ENCODE measurements at regions of chr3 and their contacts with region 1.

Region 1: GRCh38 chr3:114152519-114153151 is 26.2 kb downstream of the DRD3 start:
- DNase-seq: peak; percentile 78
- ATAC-seq: peak; percentile 98
- H3K4me3 Mint-ChIP-seq: peak overlapping the region; percentile 68
- H3K27ac Mint-ChIP-seq: peak overlapping the region; percentile 47
- H3K4me1 Mint-ChIP-seq: peaks cover 11% of the 10 kb centered on the region
- H3K27me3 Mint-ChIP-seq: no peaks in the 10 kb centered on the region
- CTCF ChIP-seq: peak; percentile 18

Region 2: DNA sequence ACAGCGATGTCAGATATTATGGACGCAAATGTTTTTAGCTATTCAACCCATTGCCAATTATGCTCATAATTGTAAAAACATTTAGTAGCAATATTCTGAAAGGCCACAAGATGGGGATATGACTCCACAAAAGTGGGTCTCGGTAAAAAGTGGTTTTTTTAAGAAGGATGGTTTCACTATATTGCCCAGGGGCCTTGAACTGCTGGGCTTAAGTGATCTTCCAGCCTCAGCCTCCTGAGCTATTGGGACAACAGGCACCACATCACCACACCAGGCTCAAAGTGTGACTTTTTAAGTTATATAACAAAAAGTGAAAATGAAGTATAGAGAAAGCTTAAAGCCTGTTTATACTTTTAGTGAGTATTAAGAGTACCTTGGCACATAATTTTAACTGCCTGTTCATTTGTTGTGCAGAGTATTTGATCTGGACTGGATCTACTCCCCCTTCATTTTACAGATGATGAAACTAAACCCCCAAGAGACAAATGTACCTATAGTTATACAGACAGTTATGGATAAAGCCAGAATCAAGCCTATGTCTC is 416.0 kb before region 1 on chr3:
- CTCF ChIA-PET with region 1: interaction called, 7 read pairs
- POLR2A ChIA-PET with region 1: no interaction called
- intact Hi-C with region 1: loop called (anchors 1 kb)
- DNase-seq: no peak
- ATAC-seq: peak; percentile 86
- H3K4me3 Mint-ChIP-seq: no peak overlapping the region
- H3K27ac Mint-ChIP-seq: peak overlapping the region; percentile 76
- H3K4me1 Mint-ChIP-seq: peaks cover 40% of the 10 kb centered on the region
- H3K27me3 Mint-ChIP-seq: no peaks in the 10 kb centered on the region
- CTCF ChIP-seq: no peak

Region 3: DNA sequence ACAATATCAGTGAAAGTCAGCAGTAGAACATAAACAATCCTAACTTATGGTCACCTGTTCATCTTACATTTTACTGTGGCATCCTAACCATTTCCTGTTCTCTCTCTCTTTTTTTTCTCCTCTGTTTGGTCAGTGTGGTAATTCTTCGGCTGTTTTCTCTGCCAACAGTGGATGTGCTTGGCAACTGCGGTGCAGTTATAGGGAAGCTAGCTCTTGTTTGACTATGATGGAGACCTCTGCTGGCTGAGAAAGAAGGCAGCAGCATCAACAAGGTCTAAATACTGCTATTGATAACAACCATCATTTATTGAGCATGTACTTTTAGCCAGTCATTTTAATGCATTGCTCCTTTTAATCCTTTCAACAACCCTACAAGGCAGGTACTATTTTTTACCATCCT is 26.9 kb after region 1 on chr3:
- CTCF ChIA-PET with region 1: interaction called, 8 read pairs
- POLR2A ChIA-PET with region 1: no interaction called
- intact Hi-C with region 1: loop called (anchors 2 kb)
- DNase-seq: no peak
- ATAC-seq: peak; percentile 50
- H3K4me3 Mint-ChIP-seq: no peak overlapping the region
- H3K27ac Mint-ChIP-seq: no peak overlapping the region
- H3K4me1 Mint-ChIP-seq: peaks cover 3% of the 10 kb centered on the region
- H3K27me3 Mint-ChIP-seq: peaks cover 9% of the 10 kb centered on the region
- CTCF ChIP-seq: no peak

Region 4: GRCh38 chr3:114362815-114363214 is 210.2 kb after region 1 on chr3:
- CTCF ChIA-PET with region 1: interaction called, 3 read pairs
- POLR2A ChIA-PET with region 1: no interaction called
- intact Hi-C with region 1: loop called (anchors 1 kb)
- DNase-seq: no peak
- ATAC-seq: peak; percentile 34
- H3K4me3 Mint-ChIP-seq: no peak overlapping the region
- H3K27ac Mint-ChIP-seq: no peak overlapping the region
- H3K4me1 Mint-ChIP-seq: peaks cover 4% of the 10 kb centered on the region
- H3K27me3 Mint-ChIP-seq: no peaks in the 10 kb centered on the region
- CTCF ChIP-seq: no peak

Region 5: DNA sequence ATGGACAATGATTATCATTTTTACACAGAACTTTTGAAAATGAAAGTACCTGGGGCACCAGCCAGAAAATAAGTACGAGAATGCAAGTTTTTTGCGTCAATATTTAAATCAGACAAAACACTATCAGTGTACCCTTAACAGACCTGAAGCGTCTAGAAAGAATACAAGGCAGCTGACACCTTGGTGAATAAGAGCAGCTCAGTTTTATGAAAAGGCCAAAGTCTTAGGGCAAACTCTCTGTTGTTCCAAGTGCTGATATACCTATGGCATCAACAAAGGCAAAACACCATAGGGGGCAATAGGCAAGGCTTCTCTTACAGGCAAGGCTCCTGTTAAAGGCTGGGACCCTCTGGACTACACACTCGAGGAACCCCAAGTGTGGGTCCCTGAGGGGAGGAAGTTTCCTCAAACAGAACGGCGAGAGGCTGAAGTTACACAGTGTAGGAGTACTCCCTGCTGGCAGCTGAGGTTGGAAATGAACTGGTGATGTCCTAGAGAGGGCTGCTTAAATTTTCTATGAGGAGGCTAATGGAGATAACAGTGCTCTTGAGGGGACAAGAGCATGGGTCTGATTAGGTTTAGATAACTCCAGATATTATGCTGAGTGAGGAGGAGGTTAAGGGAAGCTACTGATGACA is 432.2 kb after region 1 on chr3:
- CTCF ChIA-PET with region 1: no interaction called
- POLR2A ChIA-PET with region 1: no interaction called
- intact Hi-C with region 1: loop called (anchors 1 kb)
- DNase-seq: no peak
- ATAC-seq: peak; percentile 73
- H3K4me3 Mint-ChIP-seq: peak overlapping the region; percentile 63
- H3K27ac Mint-ChIP-seq: peak overlapping the region; percentile 76
- H3K4me1 Mint-ChIP-seq: peaks cover 23% of the 10 kb centered on the region
- H3K27me3 Mint-ChIP-seq: no peaks in the 10 kb centered on the region
- CTCF ChIP-seq: no peak

Region 6: GRCh38 chr3:115692887-115693524 is 1540.4 kb after region 1 on chr3:
- CTCF ChIA-PET with region 1: no interaction called
- POLR2A ChIA-PET with region 1: no interaction called
- intact Hi-C with region 1: loop called (anchors 1 kb)
- DNase-seq: peak; percentile 28
- ATAC-seq: peak; percentile 95
- H3K4me3 Mint-ChIP-seq: no peak overlapping the region
- H3K27ac Mint-ChIP-seq: no peak overlapping the region
- H3K4me1 Mint-ChIP-seq: peaks cover 3% of the 10 kb centered on the region
- H3K27me3 Mint-ChIP-seq: no peaks in the 10 kb centered on the region
- CTCF ChIP-seq: no peak

Measured in activated B cell treated with CpG ODN at 0.5 μM for 24 hours (primary cell).